ENCODE measurements at regions of chr9 and their contacts with region 1.

Region 1: GRCh38 chr9:112844771-112845542 is 45.7 kb downstream of the SLC46A2 start:
- DNase-seq: peak; percentile 83 to 88 (median 86)
- ATAC-seq: peak; percentile 96
- H3K4me3 ChIP-seq: no peak overlapping the region
- H3K27ac ChIP-seq: 0 out of 3 replicates have a peak overlapping the region, but pooled peaks have one; percentile 14
- H3K4me1 ChIP-seq: peaks cover 0 to 5% of the 10 kb centered on the region in 2 experiments; a peak in 2 of 5 replicates
- H3K27me3 ChIP-seq: no peaks in the 10 kb centered on the region
- CTCF ChIP-seq: peak; percentile 83 to 97 (median 96)
- EP300 ChIP-seq: no peak; the same call in 1 of the 2 replicates
- POLR2A ChIP-seq: no peak
- RAD21 ChIP-seq: peak; percentile 80 to 84

Region 2: DNA sequence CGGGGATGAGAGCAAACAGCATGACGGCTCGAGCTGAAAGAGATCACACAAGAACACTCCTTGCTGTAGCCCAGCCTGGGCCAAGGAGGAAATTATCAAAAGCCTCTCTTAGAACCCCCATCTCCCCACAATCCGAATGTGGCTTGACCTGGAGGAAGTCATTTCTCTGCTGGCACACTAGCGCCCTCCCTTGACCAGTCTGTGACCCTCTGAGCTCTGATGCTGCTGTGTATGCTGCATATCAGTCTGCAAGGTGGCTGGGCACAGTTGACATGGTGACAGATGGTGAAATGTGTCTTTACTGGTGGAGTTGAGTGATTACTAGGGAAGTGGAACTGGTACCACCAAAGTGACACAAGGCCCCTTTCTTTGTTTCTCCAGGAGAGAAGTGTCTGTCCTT is 42.4 kb after region 1 on chr9:
- CTCF ChIA-PET with region 1: interaction called, 8 read pairs
- POLR2A ChIA-PET with region 1: no interaction called
- in situ Hi-C with region 1: no loop called
- intact Hi-C with region 1: loop called (anchors 1 kb)
- DNase-seq: peak; percentile 24 to 60 (median 39)
- ATAC-seq: peak; percentile 91
- H3K4me3 ChIP-seq: no peak overlapping the region
- H3K27ac ChIP-seq: no peak overlapping the region
- H3K4me1 ChIP-seq: peaks cover 0 to 14% of the 10 kb centered on the region in 2 experiments; a peak in 1 of 5 replicates
- H3K27me3 ChIP-seq: peaks cover 39 to 72% of the 10 kb centered on the region in 2 experiments
- CTCF ChIP-seq: peak; percentile 72 to 79 (median 74)
- EP300 ChIP-seq: no peak
- POLR2A ChIP-seq: no peak
- RAD21 ChIP-seq: peak; percentile 44 to 67

Region 3: DNA sequence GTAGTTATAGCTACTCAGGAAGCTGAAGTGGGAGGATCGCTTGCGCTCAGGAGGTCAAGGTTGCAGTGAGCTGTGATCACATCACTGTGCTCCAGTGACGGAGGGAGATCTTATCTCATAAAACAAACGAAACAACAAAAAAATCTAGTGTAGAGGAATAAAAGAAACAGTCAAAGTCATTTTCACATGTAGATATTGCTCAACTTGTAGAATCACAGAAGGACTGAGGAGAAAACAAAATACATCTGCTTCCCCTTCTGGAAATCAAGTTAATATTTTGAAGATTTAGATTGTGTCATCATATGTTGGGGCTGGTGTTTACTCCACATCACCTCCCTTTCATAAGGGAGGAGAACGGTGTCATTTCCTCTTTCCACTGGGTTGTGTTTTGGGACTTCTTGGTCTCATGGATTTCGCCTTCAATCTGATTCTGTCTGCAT is 53.9 kb after region 1 on chr9:
- CTCF ChIA-PET with region 1: interaction called, 13 read pairs
- POLR2A ChIA-PET with region 1: no interaction called
- in situ Hi-C with region 1: no loop called
- intact Hi-C with region 1: loop called (anchors 1 kb)
- DNase-seq: no peak
- ATAC-seq: no peak
- H3K4me3 ChIP-seq: no peak overlapping the region
- H3K27ac ChIP-seq: no peak overlapping the region
- H3K4me1 ChIP-seq: no peaks in the 10 kb centered on the region
- H3K27me3 ChIP-seq: 0 out of 5 replicates have a peak, but pooled peaks cover 0 to 4% of the 10 kb centered on the region in 2 experiments
- CTCF ChIP-seq: no peak
- EP300 ChIP-seq: no peak
- POLR2A ChIP-seq: no peak
- RAD21 ChIP-seq: no peak

Measured in K562 (cell line).